ENCODE measurements at regions of chr3 and their contacts with region 1.

Region 1: GRCh38 chr3:187738331-187739093 is 6.8 kb downstream of the BCL6 start:
- DNase-seq: peak; percentile 85
- H3K4me3 Mint-ChIP-seq: peak overlapping the region; percentile 86
- H3K27ac Mint-ChIP-seq: peak overlapping the region; percentile 97
- H3K4me1 Mint-ChIP-seq: peaks cover 35% of the 10 kb centered on the region
- H3K27me3 Mint-ChIP-seq: no peaks in the 10 kb centered on the region

Region 2: DNA sequence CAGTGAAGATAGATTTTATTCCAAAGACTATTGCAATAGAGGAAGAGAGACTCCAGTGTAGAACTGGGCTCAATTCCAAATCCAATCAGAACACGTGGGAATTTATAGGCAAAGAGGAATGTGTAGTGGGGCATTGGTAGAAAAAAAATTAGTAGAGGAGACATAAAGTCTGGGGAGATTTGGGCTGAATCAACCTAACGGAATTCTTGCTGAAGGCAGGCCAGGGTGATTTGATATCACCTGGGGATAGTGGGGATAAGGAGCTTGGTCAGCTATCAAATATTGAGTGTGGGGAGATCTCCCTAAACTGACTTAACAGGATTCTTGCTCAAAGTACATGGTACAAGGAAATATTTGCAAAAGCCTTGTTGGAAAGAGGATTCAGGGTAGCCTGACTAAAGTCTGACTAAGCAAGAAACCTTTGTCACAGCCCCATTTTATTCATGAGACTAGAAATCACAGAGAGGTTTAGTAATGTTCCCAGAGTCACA is 97.9 kb before region 1 on chr3:
- CTCF ChIA-PET with region 1: no interaction called
- intact Hi-C with region 1: no loop called
- DNase-seq: no peak
- H3K4me3 Mint-ChIP-seq: no peak overlapping the region
- H3K27ac Mint-ChIP-seq: no peak overlapping the region
- H3K4me1 Mint-ChIP-seq: no peaks in the 10 kb centered on the region
- H3K27me3 Mint-ChIP-seq: peaks cover 17% of the 10 kb centered on the region

Region 3: GRCh38 chr3:187850331-187850921 is 111.9 kb after region 1 on chr3:
- CTCF ChIA-PET with region 1: no interaction called
- intact Hi-C with region 1: no loop called
- DNase-seq: no peak
- H3K4me3 Mint-ChIP-seq: no peak overlapping the region
- H3K27ac Mint-ChIP-seq: no peak overlapping the region
- H3K4me1 Mint-ChIP-seq: peaks cover 5% of the 10 kb centered on the region
- H3K27me3 Mint-ChIP-seq: no peaks in the 10 kb centered on the region

Region 4: DNA sequence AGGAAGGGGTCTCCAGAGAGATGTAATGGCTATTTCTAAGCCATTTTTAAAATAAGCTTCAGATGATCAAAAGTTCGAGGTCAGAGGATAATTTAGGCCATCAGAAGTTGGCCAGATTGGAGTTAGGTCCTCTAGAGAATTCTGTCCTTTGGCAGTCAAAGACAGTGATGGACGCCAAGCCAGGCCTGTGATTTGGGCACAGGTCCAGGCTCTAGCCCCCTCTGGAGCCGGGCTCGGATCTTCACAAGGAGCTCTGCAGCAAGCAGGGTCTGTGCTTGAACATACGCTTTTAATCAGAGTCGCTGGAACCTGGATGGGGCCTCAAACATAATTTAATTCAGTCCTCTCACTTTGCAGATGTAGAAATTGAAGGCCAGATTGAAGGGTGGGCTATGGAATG is 158.1 kb after region 1 on chr3:
- CTCF ChIA-PET with region 1: no interaction called
- intact Hi-C with region 1: no loop called
- DNase-seq: no peak
- H3K4me3 Mint-ChIP-seq: no peak overlapping the region
- H3K27ac Mint-ChIP-seq: no peak overlapping the region
- H3K4me1 Mint-ChIP-seq: peaks cover 3% of the 10 kb centered on the region
- H3K27me3 Mint-ChIP-seq: no peaks in the 10 kb centered on the region

Region 5: GRCh38 chr3:187926620-187927019 is 188.1 kb after region 1 on chr3:
- CTCF ChIA-PET with region 1: interaction called, 14 read pairs
- intact Hi-C with region 1: no loop called
- DNase-seq: no peak
- H3K4me3 Mint-ChIP-seq: no peak overlapping the region
- H3K27ac Mint-ChIP-seq: no peak overlapping the region
- H3K4me1 Mint-ChIP-seq: peaks cover 60% of the 10 kb centered on the region
- H3K27me3 Mint-ChIP-seq: no peaks in the 10 kb centered on the region

Region 6: DNA sequence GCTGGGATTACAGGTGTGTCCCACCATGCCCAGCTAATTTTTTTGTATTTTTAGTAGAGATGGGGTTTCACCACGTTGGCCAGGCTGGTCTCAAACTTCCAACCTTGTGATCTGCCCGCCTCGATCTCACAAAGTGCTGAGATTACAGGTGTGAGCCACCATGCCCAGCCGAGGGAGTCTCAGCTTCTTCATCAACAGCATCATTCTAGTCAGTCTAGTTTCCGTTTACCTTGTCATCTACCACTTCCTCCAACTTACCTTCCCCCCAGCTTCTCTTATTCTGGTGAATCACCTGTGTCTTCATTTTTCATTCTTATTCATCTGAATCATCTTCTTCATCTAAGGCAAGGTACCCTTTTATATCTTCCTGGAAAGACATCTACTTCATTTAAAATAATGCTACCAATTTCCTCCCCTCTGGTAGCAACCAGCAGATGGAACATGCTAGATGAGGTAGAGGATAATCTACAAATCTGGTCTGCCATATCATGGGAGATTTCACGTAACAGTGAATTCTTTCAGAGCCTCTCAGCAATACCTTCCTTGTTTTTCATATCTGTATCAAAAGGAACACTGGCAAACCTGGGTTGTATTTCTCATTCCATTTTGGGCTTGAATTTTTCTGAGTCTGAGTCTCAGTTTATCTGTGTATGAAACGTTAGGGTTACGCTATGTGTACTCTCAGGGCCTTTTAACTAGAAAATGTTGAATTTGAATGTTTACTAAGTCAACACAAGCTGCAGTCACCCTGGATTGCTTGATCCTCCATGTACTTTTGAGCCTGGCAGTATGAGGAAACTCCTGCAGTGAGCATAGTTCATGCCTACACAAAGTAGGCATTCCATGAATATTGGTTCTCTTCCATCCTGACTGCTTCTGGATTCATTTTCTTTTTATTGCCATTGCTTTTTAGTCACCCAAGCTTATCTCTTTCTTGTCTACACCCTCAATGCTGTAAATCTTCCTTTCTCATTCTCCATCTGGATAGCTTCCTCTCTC is 432.2 kb after region 1 on chr3:
- CTCF ChIA-PET with region 1: interaction called, 5 read pairs
- intact Hi-C with region 1: loop called (anchors 2 kb)
- DNase-seq: peak; percentile 89
- H3K4me3 Mint-ChIP-seq: peak overlapping the region; percentile 39
- H3K27ac Mint-ChIP-seq: peak overlapping the region; percentile 86
- H3K4me1 Mint-ChIP-seq: peaks cover 64% of the 10 kb centered on the region
- H3K27me3 Mint-ChIP-seq: no peaks in the 10 kb centered on the region

Region 7: GRCh38 chr3:188320757-188321156 is 582.2 kb after region 1 on chr3:
- CTCF ChIA-PET with region 1: interaction called, 3 read pairs
- intact Hi-C with region 1: loop called (anchors 1 kb)
- DNase-seq: no peak
- H3K4me3 Mint-ChIP-seq: no peak overlapping the region
- H3K27ac Mint-ChIP-seq: no peak overlapping the region
- H3K4me1 Mint-ChIP-seq: peaks cover 49% of the 10 kb centered on the region
- H3K27me3 Mint-ChIP-seq: no peaks in the 10 kb centered on the region

Region 8: DNA sequence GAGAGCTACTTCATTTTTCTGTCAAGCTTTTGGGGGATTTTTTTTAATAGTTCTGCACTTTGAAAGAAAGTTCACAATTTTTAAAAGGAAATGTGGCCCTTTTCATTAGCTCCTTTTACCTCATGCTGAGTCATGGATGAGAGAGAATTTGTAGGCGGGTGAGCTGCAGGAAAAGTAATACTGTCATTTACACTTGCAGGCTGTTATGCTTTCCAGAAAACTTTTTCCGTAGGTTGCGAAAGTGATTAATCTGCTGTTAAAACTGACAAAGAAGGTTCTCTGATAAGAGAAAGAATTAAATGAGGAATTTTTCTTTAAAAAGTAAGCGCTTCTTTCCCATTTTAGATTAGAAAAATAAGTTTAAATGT is 845.6 kb after region 1 on chr3:
- CTCF ChIA-PET with region 1: interaction called, 8 read pairs
- intact Hi-C with region 1: loop called (anchors 1 kb)
- DNase-seq: peak; percentile 61
- H3K4me3 Mint-ChIP-seq: no peak overlapping the region
- H3K27ac Mint-ChIP-seq: no peak overlapping the region
- H3K4me1 Mint-ChIP-seq: peaks cover 15% of the 10 kb centered on the region
- H3K27me3 Mint-ChIP-seq: no peaks in the 10 kb centered on the region

Region 9: DNA sequence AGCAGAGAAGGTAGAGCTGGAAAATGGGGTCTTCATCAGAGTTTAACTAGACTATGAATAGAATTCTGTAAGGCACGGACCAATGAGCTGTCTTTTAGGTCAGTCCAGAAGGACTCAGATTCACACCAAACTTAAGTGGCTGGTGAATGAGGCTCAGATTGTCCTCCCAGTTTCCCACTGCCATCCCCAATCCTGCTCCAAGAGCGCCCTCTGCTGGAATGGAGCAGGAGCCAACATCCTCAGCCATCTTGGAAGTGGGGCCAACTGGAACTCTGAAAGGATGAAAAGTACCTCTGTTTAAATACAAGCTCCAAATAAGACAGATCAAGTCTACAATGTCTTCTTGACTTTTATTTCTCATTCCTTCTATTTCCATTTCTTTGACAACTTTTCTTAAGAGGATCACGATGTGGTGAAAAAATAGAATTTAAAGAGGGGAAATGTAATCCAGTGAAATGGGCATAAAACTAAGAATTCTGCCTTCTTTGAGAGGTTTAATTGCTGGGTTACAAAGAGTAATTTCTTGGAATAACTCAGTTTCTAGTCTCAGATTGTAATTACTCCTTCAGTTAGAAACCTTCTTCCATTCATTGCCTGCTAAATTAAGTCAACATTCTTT is 1216.2 kb after region 1 on chr3:
- CTCF ChIA-PET with region 1: interaction called, 245 read pairs
- intact Hi-C with region 1: loop called (anchors 1 kb)
- DNase-seq: peak; percentile 91
- H3K4me3 Mint-ChIP-seq: no peak overlapping the region
- H3K27ac Mint-ChIP-seq: no peak overlapping the region
- H3K4me1 Mint-ChIP-seq: peaks cover 39% of the 10 kb centered on the region
- H3K27me3 Mint-ChIP-seq: no peaks in the 10 kb centered on the region

Region 10: DNA sequence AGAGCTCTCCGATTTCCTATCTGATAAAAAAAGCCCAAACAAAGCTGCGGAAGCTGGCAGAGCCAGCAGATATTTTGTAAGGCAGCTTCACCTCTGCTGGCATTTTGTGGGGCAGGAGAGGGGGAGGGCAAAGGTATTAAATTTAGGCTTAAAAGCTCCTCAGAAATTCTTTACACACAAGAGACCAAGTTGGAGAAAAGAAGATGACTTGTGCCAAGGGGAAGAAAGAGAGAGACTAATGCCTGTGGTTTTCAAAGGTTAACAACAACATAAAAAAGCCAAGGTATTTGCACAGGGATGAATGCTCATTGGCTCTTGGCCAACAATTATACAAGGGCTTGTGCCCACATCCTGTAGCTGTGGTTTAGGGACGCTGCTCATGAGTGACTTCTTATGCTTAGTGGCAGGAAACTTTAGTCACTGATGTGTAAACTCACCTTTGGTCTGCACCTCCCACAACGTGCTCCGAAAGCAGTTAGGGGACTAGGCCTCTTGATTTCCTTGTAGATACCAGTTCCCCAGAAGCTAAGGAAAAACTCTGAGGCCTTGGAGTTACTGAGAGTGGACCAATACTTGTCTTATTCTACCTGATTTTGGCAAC is 1586.1 kb after region 1 on chr3:
- CTCF ChIA-PET with region 1: no interaction called
- intact Hi-C with region 1: loop called (anchors 1 kb)
- DNase-seq: peak; percentile 95
- H3K4me3 Mint-ChIP-seq: peak overlapping the region; percentile 36
- H3K27ac Mint-ChIP-seq: peak overlapping the region; percentile 88
- H3K4me1 Mint-ChIP-seq: peaks cover 56% of the 10 kb centered on the region
- H3K27me3 Mint-ChIP-seq: no peaks in the 10 kb centered on the region